Activated CD8-positive, alpha-beta T cell treated with anti-CD3 and anti-CD28 coated beads for 36 hours (primary cell): ENCODE measurements at regions of chr3 and their contacts with region 1.

Region 1: DNA sequence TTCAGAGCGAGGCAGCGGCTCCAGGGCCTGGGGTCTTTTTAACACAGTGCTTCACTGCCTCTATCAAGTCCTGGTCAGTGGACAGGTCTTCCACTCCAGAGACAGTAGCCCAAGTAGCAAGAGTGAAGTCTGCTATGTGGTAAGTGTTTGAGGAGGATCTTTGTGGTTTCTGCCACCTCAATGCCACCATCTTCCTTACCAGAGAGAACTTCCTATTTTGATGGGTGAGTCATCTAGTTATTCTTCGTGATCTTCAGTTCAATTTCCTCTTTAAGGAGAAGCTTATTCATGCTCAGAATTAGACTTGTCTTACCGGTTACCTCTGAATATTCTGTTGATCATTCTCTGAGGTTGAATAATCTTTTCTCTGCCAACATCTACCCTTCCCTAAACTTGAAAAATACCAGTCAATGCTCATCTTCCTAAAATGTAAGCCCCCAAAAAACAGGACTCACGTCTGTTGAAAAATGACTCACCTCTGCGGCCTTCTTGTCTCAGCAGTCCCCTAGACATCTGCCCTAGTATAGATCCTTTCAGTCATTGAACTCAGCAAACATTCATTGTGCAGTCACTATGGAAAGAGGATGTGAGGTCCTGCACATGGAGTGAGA is 32.2 kb upstream of the BCL6 start:
- DNase-seq: peak; percentile 75
- ATAC-seq: peak; percentile 89
- H3K4me3 Mint-ChIP-seq: peak overlapping the region; percentile 49
- H3K27ac Mint-ChIP-seq: peak overlapping the region; percentile 98
- H3K4me1 Mint-ChIP-seq: peaks cover 34% of the 10 kb centered on the region
- H3K27me3 Mint-ChIP-seq: peaks cover 2% of the 10 kb centered on the region
- CTCF ChIP-seq: no peak

Region 2: GRCh38 chr3:187150599-187150998 is 626.8 kb before region 1 on chr3:
- CTCF ChIA-PET with region 1: no interaction called
- POLR2A ChIA-PET with region 1: no interaction called
- intact Hi-C with region 1: no loop called
- DNase-seq: peak; percentile 85
- ATAC-seq: peak; percentile 86
- H3K4me3 Mint-ChIP-seq: no peak overlapping the region
- H3K27ac Mint-ChIP-seq: no peak overlapping the region
- H3K4me1 Mint-ChIP-seq: no peaks in the 10 kb centered on the region
- H3K27me3 Mint-ChIP-seq: no peaks in the 10 kb centered on the region
- CTCF ChIP-seq: peak; percentile 55

Region 3: GRCh38 chr3:187802928-187803259 is 25.5 kb after region 1 on chr3:
- CTCF ChIA-PET with region 1: interaction called, 4 read pairs
- POLR2A ChIA-PET with region 1: interaction called, 3 read pairs
- intact Hi-C with region 1: loop called (anchors 1 kb)
- DNase-seq: peak; percentile 86
- ATAC-seq: peak; percentile 48
- H3K4me3 Mint-ChIP-seq: peak overlapping the region; percentile 52
- H3K27ac Mint-ChIP-seq: peak overlapping the region; percentile 92
- H3K4me1 Mint-ChIP-seq: peaks cover 93% of the 10 kb centered on the region
- H3K27me3 Mint-ChIP-seq: no peaks in the 10 kb centered on the region
- CTCF ChIP-seq: no peak